SK-N-SH (cell line): ENCODE measurements at regions of chr16 and their contacts with region 1.

Region 1: GRCh38 chr16:70770626-70771552 is 30.1 kb downstream of the VAC14 start:
- DNase-seq: peak; percentile 79
- H3K4me3 ChIP-seq: no peak overlapping the region; a peak in 1 of 4 replicates
- H3K27ac ChIP-seq: 0 out of 4 replicates have a peak overlapping the region, but pooled peaks of 1 of the 2 experiments have one; percentile 5
- H3K4me1 ChIP-seq: peaks cover 0 to 3% of the 10 kb centered on the region in 2 experiments; a peak in 1 of 4 replicates
- H3K27me3 ChIP-seq: no peaks in the 10 kb centered on the region
- CTCF ChIP-seq: peak; percentile 93
- EP300 ChIP-seq: no peak
- RAD21 ChIP-seq: peak; percentile 94

Region 2: DNA sequence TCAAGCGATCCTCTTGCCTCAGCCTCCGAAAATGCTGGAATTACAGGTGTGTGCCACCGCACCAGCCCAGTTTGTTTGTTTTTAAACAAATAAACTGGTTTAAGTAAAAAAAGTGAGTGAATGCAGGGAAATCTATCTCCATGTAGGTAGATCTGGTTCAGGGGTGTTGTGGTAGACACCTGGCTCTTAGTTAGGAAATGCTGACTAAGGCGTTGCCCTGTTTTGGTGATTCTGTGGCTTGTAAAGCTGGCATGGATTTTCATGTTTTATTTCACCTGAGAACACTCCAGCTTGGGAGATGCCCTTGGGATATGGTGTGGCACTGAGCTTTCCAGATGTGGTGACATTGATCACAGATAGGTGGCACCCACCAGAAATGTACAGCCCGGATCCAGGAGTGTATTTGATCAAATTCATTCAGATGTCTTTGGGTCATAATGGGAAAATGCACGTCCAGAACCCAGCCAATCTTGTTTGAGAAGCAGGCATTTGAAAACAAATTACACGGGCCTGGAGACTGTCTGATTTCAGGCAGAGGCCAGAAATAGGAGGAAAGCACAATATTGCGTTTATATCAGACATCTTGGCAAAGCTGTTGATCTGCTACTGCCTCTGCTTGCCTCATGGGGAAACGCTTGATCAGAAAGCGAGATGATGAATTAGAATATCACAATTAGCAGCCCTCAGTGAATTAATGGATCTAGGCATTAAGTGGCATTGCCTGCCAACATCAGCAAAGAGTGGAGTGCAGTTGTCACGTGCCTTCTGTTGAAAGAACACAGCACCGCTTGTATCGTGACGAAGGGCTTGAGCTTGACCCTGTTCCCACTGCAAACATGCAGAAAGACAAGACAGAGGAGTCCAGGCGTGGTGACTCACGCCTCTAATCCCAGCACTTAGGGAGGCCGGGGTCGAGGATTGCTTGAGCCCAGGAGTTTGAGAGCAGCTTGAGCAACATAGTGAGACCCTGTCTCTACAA is 131.8 kb before region 1 on chr16:
- CTCF ChIA-PET with region 1: interaction called, 13 read pairs
- POLR2A ChIA-PET with region 1: no interaction called
- DNase-seq: peak; percentile 67
- H3K4me3 ChIP-seq: no peak overlapping the region
- H3K27ac ChIP-seq: peak overlapping the region; percentile 40 to 52
- H3K4me1 ChIP-seq: peaks cover 6 to 9% of the 10 kb centered on the region in 2 experiments; a peak in 3 of 4 replicates
- H3K27me3 ChIP-seq: no peaks in the 10 kb centered on the region
- CTCF ChIP-seq: 0 out of 2 replicates have a peak, but pooled peaks have one; percentile 19
- EP300 ChIP-seq: peak in 1 of 2 experiments; percentile 45; a peak in 1 of 4 replicates
- RAD21 ChIP-seq: no peak

Region 3: GRCh38 chr16:70685938-70686375 is 84.9 kb before region 1 on chr16 and contains the start of gene MTSS2:
- CTCF ChIA-PET with region 1: interaction called, 181 read pairs
- POLR2A ChIA-PET with region 1: interaction called, 5 read pairs
- DNase-seq: peak; percentile 97
- H3K4me3 ChIP-seq: peak within 1 kb of the TSS; percentile 76 to 97
- H3K27ac ChIP-seq: peak within 1 kb of the TSS; percentile 67 to 81
- H3K4me1 ChIP-seq: peaks cover 24 to 88% of the 10 kb centered on the region in 2 experiments
- H3K27me3 ChIP-seq: no peaks in the 10 kb centered on the region
- CTCF ChIP-seq: no peak
- EP300 ChIP-seq: peak in 1 of 2 experiments; percentile 49; a peak in 1 of 4 replicates
- RAD21 ChIP-seq: no peak
- polyA plus RNA-seq, gene MTSS2: 41.3 and 54.1 TPM in 2 replicates

Region 4: DNA sequence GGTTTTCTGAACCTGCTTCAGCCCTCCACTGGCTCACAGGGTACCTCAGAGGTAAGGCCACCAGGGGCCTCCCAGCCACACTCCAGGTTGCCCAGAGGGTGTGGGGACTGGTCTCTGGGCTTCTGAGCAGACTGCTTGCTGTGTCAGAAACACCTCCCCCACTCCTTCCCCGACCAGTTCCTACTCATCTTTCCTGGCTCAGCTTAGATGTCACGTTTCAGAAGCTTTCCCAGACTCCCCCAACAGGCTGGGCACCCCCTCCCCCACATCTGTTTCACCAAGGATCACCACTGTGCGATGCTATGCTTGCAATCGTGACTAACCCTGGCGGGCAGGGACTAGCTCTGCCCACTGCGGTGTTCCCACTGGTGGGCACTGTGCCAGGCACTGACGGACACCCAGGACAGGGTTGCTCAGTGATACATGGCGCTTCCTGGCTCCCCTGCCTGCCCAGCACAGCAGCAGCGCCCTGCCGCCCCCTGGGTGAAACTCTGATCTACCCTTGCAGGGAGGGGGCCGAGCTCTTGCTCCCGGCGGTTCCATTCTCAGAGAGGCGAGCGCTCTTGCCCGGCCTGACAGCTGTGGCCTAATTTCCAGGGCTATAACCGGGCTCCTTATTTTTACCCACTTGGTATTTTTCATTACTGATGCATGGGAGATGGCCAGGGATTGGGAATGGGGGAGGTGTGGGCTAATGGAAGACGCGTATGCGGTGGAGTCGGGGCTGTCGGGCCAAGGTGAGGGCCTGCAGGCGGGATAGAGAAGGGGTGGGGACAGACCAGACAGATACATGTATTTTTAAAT is 55.6 kb before region 1 on chr16:
- CTCF ChIA-PET with region 1: interaction called, 29 read pairs
- POLR2A ChIA-PET with region 1: no interaction called
- DNase-seq: peak; percentile 87
- H3K4me3 ChIP-seq: peak overlapping the region; percentile 24 to 52; a peak in 2 of 4 replicates
- H3K27ac ChIP-seq: peak overlapping the region; percentile 98 to 100
- H3K4me1 ChIP-seq: peaks cover 31 to 69% of the 10 kb centered on the region in 2 experiments
- H3K27me3 ChIP-seq: no peaks in the 10 kb centered on the region
- CTCF ChIP-seq: peak; percentile 41
- EP300 ChIP-seq: peak; percentile 54 to 85; a peak in 3 of 4 replicates
- RAD21 ChIP-seq: no peak; the same call in 1 of the 2 replicates

Region 5: GRCh38 chr16:70743791-70744190 is 27.1 kb before region 1 on chr16:
- CTCF ChIA-PET with region 1: interaction called, 33 read pairs
- POLR2A ChIA-PET with region 1: no interaction called
- DNase-seq: no peak
- H3K4me3 ChIP-seq: no peak overlapping the region
- H3K27ac ChIP-seq: no peak overlapping the region
- H3K4me1 ChIP-seq: peaks cover 26 to 50% of the 10 kb centered on the region in 2 experiments; a peak in 3 of 4 replicates
- H3K27me3 ChIP-seq: no peaks in the 10 kb centered on the region
- CTCF ChIP-seq: no peak
- EP300 ChIP-seq: no peak
- RAD21 ChIP-seq: no peak

Region 6: GRCh38 chr16:70788561-70789225 is 17.8 kb after region 1 on chr16:
- CTCF ChIA-PET with region 1: interaction called, 12 read pairs
- POLR2A ChIA-PET with region 1: no interaction called
- DNase-seq: no peak
- H3K4me3 ChIP-seq: no peak overlapping the region
- H3K27ac ChIP-seq: no peak overlapping the region
- H3K4me1 ChIP-seq: no peaks in the 10 kb centered on the region
- H3K27me3 ChIP-seq: no peaks in the 10 kb centered on the region
- CTCF ChIP-seq: no peak
- EP300 ChIP-seq: no peak
- RAD21 ChIP-seq: no peak